Activated T-helper 1 cell treated with anti-CD3 and anti-CD28 coated beads, Interleukin-12 subunit alpha, Interleukin-12 subunit beta, Interleukin-2, Interleukin-4 antibody, amounts not matched to agents 30 ng/mL and 10 ng/mL and 1 ng/mL, durations not matched to agents 14 hours and 24 hours and 36 hours (primary cell): ENCODE measurements at regions of chr20 and their contacts with region 1.

Region 1: DNA sequence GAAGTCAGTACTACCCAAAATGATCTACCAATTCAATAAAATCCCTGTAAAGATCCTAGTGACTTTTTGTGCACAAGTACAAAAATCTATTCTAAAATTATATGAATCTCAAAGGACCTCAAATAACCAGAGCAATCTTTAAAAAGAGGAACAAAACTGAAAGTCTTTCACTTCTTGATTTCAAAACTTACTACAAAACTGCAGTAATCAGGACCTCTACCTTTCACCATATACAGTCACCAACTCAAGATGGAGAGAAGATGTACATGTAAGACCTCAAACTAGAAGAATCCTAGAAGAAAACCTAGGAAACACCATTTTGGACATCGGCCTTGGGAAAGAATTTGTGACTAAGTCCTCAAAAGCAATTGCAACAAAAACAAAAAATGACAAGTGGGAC is 109.5 kb upstream of the CD93 start:
- DNase-seq: no peak
- H3K4me3 Mint-ChIP-seq: no peak overlapping the region
- H3K27ac Mint-ChIP-seq: no peak overlapping the region
- H3K4me1 Mint-ChIP-seq: no peaks in the 10 kb centered on the region
- H3K27me3 Mint-ChIP-seq: peaks cover 26% of the 10 kb centered on the region

Region 2: GRCh38 chr20:23050847-23051631 is 144.6 kb before region 1 on chr20:
- intact Hi-C with region 1: loop called (anchors 5 kb)
- DNase-seq: no peak
- H3K4me3 Mint-ChIP-seq: no peak overlapping the region
- H3K27ac Mint-ChIP-seq: no peak overlapping the region
- H3K4me1 Mint-ChIP-seq: no peaks in the 10 kb centered on the region
- H3K27me3 Mint-ChIP-seq: peaks cover 64% of the 10 kb centered on the region

Region 3: DNA sequence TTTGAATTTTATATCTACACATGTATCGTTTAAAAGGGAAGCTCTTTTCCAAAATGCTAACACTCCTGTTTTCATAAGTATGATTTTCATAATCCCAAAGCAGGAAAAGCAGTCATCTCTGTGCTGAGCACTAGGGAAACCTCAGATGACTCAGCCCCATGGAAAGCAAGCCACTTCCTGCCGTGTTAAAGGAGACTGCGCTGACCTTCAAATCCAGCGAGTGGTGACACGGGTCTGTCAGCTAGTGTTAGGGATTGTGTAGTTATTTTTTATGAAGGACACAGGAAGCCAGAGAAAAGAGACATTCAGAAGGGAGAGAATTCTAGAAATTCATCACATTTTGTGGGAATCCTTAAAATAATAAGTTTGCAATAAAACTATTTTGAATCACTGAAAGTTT is 52.5 kb before region 1 on chr20:
- intact Hi-C with region 1: no loop called
- DNase-seq: peak; percentile 32
- H3K4me3 Mint-ChIP-seq: peak overlapping the region; percentile 34
- H3K27ac Mint-ChIP-seq: peak overlapping the region; percentile 73
- H3K4me1 Mint-ChIP-seq: peaks cover 74% of the 10 kb centered on the region
- H3K27me3 Mint-ChIP-seq: peaks cover 12% of the 10 kb centered on the region